Heart right ventricle (tissue), 16 donors: ENCODE measurements at regions of chr6 and their contacts with region 1.

Region 1: DNA sequence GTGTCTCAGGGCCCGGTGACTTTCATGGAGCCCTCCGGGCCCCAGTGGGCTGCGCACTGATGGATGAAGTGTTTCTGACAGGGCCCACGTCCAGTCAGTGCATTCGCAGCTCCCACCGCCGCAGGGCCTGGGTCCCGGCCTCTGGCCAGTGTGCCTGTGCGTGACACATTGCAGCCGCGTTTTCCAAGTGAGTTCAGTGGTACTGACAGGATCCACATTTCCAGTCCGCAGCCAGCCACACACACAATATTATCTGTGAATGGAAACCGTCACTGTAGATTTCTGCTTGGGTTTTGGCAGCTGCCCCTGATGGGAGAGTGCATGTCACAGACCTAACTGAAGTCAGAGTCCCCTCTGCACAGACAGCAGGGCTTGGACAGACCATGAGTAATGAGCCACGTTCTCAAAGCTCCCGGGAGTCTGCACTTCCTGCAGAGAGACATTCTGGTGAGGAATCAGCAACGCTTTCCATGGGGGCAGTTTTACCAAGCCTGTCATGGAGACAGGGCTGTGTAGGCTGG is 171.4 kb downstream of the MYLK4 start:
- DNase-seq: peak in 1 of 2 donors; percentile 60
- ATAC-seq: peak; percentile 58 to 89 (median 84)
- H3K4me3 ChIP-seq: no peak overlapping the region
- H3K27ac ChIP-seq: peak overlapping the region in 8 of 10 donors; percentile 2 to 84 (median 66)
- H3K4me1 ChIP-seq: peaks cover 0 to 10% (median 4%) of the 10 kb centered on the region in 9 donors
- H3K27me3 ChIP-seq: no peaks in the 10 kb centered on the region
- CTCF ChIP-seq: no peak

Region 2: GRCh38 chr6:2622671-2623070 is 43.4 kb after region 1 on chr6:
- intact Hi-C with region 1: loop called in 1 of 10 experiments (anchors 5 kb)
- DNase-seq: peak in 1 of 2 donors; percentile 62
- ATAC-seq: peak in 6 of 8 donors; percentile 47 to 68 (median 64)
- H3K4me3 ChIP-seq: no peak overlapping the region
- H3K27ac ChIP-seq: peak overlapping the region in 6 of 10 donors; percentile 45 to 87 (median 78)
- H3K4me1 ChIP-seq: peaks cover 0 to 36% (median 16%) of the 10 kb centered on the region in 9 donors
- H3K27me3 ChIP-seq: no peaks in the 10 kb centered on the region
- CTCF ChIP-seq: peak in 1 of 9 donors; percentile 6